Spleen (tissue), 13 donors: ENCODE measurements at regions of chr6 and their contacts with region 1.

Region 1: DNA sequence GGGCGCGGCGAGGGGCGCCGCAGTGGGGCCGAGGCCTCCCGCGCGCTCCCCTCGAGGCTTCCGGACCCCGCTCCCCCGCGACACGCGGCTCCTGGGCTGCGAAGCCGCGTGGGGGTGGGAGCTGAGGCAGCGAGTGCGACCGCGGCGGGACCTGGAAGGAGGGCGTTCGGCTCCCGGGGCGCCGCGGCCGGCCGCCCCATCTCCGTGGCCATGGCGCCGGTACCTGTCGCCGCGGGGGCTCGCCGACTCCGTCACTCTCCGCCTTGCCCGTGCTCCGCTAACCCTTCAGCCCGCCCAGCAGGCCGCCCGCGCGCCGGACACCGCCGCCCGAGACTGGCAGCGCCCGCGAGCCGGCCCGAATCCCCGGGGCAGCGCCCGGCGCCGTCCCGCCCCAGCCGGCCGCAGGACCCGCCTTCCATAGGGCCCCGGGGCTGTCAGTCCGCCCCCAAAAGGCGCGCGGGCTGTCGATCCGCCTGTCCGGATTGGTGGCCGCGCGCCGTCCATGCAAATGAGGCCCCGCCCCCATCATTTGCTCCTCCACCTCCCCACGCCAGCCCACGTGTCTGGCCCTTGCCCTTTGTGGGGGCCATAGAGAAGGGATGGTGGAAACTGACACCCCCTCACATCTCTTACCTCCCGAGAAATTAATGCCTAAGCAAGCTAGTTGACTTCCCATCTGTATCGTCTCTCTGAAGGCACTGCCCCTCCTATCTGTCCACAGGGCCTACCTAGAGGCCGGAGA is at the start of gene FKBP5:
- DNase-seq: peak; percentile 98
- H3K4me3 ChIP-seq: peak within 1 kb of the TSS; percentile 73 to 88 (median 83)
- H3K27ac ChIP-seq: peak within 1 kb of the TSS; percentile 84 to 100 (median 94)
- H3K4me1 ChIP-seq: peaks cover 4 to 73% (median 53%) of the 10 kb centered on the region in 6 donors
- H3K27me3 ChIP-seq: no peaks in the 10 kb centered on the region
- CTCF ChIP-seq: peak in 4 of 11 experiments; percentile 5 to 18 (median 12)
- POLR2A ChIP-seq: peak in 2 of 3 donors; percentile 86 to 95
- total RNA-seq, gene FKBP5: 39.9 to 368 (median 241) TPM

Region 2: GRCh38 chr6:35727935-35728682 is 39.4 kb after region 1 on chr6:
- intact Hi-C with region 1: loop called (anchors 5 kb)
- DNase-seq: peak; percentile 99
- H3K4me3 ChIP-seq: peak overlapping the region; percentile 15 to 68 (median 45)
- H3K27ac ChIP-seq: peak overlapping the region; percentile 95 to 100 (median 100)
- H3K4me1 ChIP-seq: peaks cover 60 to 98% (median 92%) of the 10 kb centered on the region in 6 donors
- H3K27me3 ChIP-seq: no peaks in the 10 kb centered on the region
- CTCF ChIP-seq: peak in 4 of 11 experiments; percentile 3 to 33 (median 28)
- POLR2A ChIP-seq: peak in 1 of 3 donors; percentile 83